ENCODE measurements at regions of chr2 and their contacts with region 1.

Region 1: GRCh38 chr2:73926493-73927338 is at the start of gene DGUOK:
- DNase-seq: peak; percentile 95 to 99
- H3K4me3 ChIP-seq: peak within 1 kb of the TSS; percentile 58 to 89 (median 75)
- H3K27ac ChIP-seq: peak within 1 kb of the TSS; percentile 93 to 97
- H3K4me1 ChIP-seq: no peaks in the 10 kb centered on the region
- H3K27me3 ChIP-seq: no peaks in the 10 kb centered on the region
- CTCF ChIP-seq: no peak
- POLR2A ChIP-seq: peak; percentile 84
- total RNA-seq, gene DGUOK: 35.4 to 45.7 (median 42.3) TPM

Region 2: GRCh38 chr2:73582364-73582763 is 344.4 kb before region 1 on chr2:
- intact Hi-C with region 1: no loop called
- DNase-seq: no peak
- H3K4me3 ChIP-seq: no peak overlapping the region
- H3K27ac ChIP-seq: no peak overlapping the region
- H3K4me1 ChIP-seq: no peaks in the 10 kb centered on the region
- H3K27me3 ChIP-seq: no peaks in the 10 kb centered on the region
- CTCF ChIP-seq: no peak
- POLR2A ChIP-seq: no peak

Region 3: DNA sequence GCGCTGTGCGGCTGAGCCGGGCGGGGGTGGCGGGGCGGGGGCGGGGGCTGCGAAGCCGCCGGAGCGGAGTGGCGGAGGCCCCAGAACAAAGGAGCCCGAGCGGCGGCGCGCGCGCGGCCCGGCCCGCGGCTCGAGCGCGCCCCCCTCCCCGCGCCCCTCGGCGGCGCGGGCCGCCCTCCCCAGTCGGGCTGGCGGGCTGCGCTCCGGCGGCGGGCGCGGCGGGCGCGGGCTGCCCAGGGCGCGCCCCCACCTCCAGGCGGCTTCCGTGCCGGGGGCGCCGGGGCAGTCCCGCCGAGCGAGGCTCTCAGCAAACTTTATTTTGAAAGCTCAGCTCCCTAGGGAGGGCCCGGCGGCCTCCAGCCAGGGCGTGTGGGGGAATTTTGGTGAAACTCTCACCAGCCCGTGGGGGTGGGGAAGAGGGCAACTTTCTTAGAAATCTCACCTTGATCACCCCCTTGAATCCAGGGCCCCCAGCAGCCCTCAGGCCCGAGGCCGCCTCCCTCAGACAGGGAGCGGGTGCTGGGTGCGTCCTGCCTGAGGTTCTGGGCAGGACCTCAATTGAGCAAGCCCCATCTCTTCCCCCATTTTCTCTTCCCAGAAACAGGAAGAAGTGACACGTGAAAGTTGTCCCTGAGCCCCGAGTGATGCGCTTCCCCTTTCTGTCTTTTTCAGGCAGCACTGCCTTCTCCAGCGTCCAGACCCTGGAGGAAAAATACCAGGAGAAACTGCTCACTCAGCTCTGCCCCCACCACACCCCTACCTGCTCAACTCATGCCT is 58.8 kb after region 1 on chr2:
- intact Hi-C with region 1: loop called (anchors 10 kb)
- DNase-seq: no peak
- H3K4me3 ChIP-seq: peak overlapping the region; percentile 54 to 83 (median 69)
- H3K27ac ChIP-seq: peak overlapping the region; percentile 90 to 91
- H3K4me1 ChIP-seq: peaks cover 8 to 12% of the 10 kb centered on the region in 2 donors
- H3K27me3 ChIP-seq: no peaks in the 10 kb centered on the region
- CTCF ChIP-seq: no peak
- POLR2A ChIP-seq: no peak

Measured in breast epithelium (tissue), 4 donors.